ENCODE measurements at regions of chr6 and their contacts with region 1.

Region 1: DNA sequence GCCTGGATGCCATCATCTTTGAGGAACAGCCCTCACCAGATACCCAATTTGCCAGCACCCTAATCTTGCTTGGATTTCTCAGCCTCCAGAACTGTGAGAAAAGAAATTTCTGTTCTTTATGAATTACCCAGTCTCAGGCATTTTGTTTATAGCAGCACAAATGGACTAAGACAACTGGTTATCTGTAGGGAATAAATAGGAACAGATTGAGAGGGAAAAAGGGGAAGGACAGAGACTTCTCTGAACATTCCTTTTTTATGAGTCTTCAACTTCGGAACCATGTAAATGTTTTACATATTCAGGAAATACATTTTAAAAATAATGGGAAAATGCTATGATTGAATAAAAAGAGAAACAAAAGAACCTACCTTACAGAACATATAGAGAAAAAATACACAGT is 20.9 kb downstream of the KCTD20 start:
- DNase-seq: no peak
- ATAC-seq: no peak
- H3K4me3 ChIP-seq: no peak overlapping the region
- H3K4me3 Mint-ChIP-seq: no peak overlapping the region
- H3K27ac ChIP-seq: no peak overlapping the region
- H3K27ac Mint-ChIP-seq: no peak overlapping the region
- H3K4me1 ChIP-seq: peaks cover 2 to 8% of the 10 kb centered on the region in 2 experiments
- H3K4me1 Mint-ChIP-seq: peaks cover 43 to 52% (median 47%) of the 10 kb centered on the region in 3 donors
- H3K27me3 ChIP-seq: no peaks in the 10 kb centered on the region
- H3K27me3 Mint-ChIP-seq: no peaks in the 10 kb centered on the region

Region 2: GRCh38 chr6:36094238-36094637 is 369.4 kb before region 1 on chr6:
- CTCF ChIA-PET with region 1: no interaction called
- POLR2A ChIA-PET with region 1: no interaction called
- DNase-seq: no peak
- ATAC-seq: no peak
- H3K4me3 ChIP-seq: no peak overlapping the region
- H3K4me3 Mint-ChIP-seq: no peak overlapping the region
- H3K27ac ChIP-seq: no peak overlapping the region
- H3K27ac Mint-ChIP-seq: peak overlapping the region; percentile 69 to 80
- H3K4me1 ChIP-seq: peaks cover 12 to 13% of the 10 kb centered on the region in 2 experiments
- H3K4me1 Mint-ChIP-seq: peaks cover 24 to 32% (median 26%) of the 10 kb centered on the region in 3 donors
- H3K27me3 ChIP-seq: no peaks in the 10 kb centered on the region
- H3K27me3 Mint-ChIP-seq: no peaks in the 10 kb centered on the region

Region 3: DNA sequence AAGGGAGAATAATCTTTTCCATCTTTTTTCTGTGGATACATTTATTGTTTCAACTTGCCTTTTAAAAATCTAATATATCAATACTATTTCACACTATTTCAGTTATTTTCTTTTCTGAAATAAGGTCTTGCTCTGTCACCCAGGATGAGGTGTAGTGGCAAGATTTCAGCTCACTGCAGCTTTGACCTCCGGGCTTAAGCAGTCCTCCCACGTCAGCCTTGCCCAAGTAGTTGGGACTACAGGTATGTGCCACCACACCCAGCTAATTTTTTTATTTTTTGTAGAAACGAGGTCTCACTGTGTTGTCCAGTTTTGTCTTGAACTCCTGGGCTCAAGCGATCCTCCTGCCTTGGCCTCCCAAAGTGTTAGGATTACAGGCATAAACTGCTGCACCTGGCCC is 12.3 kb before region 1 on chr6:
- CTCF ChIA-PET with region 1: no interaction called
- POLR2A ChIA-PET with region 1: interaction called, 3 to 10 read pairs
- DNase-seq: no peak
- ATAC-seq: no peak
- H3K4me3 ChIP-seq: no peak overlapping the region
- H3K4me3 Mint-ChIP-seq: no peak overlapping the region
- H3K27ac ChIP-seq: no peak overlapping the region
- H3K27ac Mint-ChIP-seq: no peak overlapping the region
- H3K4me1 ChIP-seq: peaks cover 0 to 15% of the 10 kb centered on the region in 2 experiments
- H3K4me1 Mint-ChIP-seq: peaks cover 17 to 51% (median 46%) of the 10 kb centered on the region in 3 donors
- H3K27me3 ChIP-seq: no peaks in the 10 kb centered on the region
- H3K27me3 Mint-ChIP-seq: no peaks in the 10 kb centered on the region

Region 4: GRCh38 chr6:36479256-36479655 is 15.6 kb after region 1 on chr6:
- CTCF ChIA-PET with region 1: interaction called in 1 of 2 experiments, 3 read pairs
- POLR2A ChIA-PET with region 1: interaction called in 1 of 2 experiments, 11 read pairs
- DNase-seq: no peak
- ATAC-seq: no peak
- H3K4me3 ChIP-seq: no peak overlapping the region
- H3K4me3 Mint-ChIP-seq: no peak overlapping the region
- H3K27ac ChIP-seq: no peak overlapping the region
- H3K27ac Mint-ChIP-seq: peak overlapping the region; percentile 33 to 72
- H3K4me1 ChIP-seq: no peaks in the 10 kb centered on the region
- H3K4me1 Mint-ChIP-seq: peaks cover 15 to 20% (median 17%) of the 10 kb centered on the region in 3 donors
- H3K27me3 ChIP-seq: no peaks in the 10 kb centered on the region
- H3K27me3 Mint-ChIP-seq: no peaks in the 10 kb centered on the region

Region 5: DNA sequence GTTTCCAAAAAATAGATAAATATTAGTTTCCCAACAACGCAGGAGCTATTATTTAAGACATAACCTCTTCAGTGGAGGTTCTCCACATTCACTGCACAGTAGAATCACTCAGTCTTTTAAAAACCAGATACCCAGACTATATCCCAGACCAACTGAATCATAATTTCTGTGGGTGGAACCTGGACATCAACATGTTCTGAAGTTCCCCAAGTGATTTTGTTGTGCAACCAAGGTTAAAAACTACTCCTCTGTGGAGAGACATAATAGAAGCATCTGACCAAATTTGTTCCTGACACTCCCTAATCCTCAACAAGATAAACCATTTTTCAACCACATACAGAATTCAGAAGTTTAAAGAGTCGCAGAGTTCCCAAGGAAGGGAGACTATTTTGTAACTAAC is 41.3 kb after region 1 on chr6:
- CTCF ChIA-PET with region 1: interaction called in 1 of 2 experiments, 3 read pairs
- POLR2A ChIA-PET with region 1: interaction called in 1 of 2 experiments, 18 read pairs
- DNase-seq: no peak
- ATAC-seq: no peak
- H3K4me3 ChIP-seq: no peak overlapping the region
- H3K4me3 Mint-ChIP-seq: no peak overlapping the region
- H3K27ac ChIP-seq: no peak overlapping the region
- H3K27ac Mint-ChIP-seq: peak overlapping the region; percentile 69 to 72
- H3K4me1 ChIP-seq: peaks cover 8 to 16% of the 10 kb centered on the region in 2 experiments
- H3K4me1 Mint-ChIP-seq: peaks cover 38 to 58% (median 49%) of the 10 kb centered on the region in 3 donors
- H3K27me3 ChIP-seq: no peaks in the 10 kb centered on the region
- H3K27me3 Mint-ChIP-seq: no peaks in the 10 kb centered on the region

Region 6: DNA sequence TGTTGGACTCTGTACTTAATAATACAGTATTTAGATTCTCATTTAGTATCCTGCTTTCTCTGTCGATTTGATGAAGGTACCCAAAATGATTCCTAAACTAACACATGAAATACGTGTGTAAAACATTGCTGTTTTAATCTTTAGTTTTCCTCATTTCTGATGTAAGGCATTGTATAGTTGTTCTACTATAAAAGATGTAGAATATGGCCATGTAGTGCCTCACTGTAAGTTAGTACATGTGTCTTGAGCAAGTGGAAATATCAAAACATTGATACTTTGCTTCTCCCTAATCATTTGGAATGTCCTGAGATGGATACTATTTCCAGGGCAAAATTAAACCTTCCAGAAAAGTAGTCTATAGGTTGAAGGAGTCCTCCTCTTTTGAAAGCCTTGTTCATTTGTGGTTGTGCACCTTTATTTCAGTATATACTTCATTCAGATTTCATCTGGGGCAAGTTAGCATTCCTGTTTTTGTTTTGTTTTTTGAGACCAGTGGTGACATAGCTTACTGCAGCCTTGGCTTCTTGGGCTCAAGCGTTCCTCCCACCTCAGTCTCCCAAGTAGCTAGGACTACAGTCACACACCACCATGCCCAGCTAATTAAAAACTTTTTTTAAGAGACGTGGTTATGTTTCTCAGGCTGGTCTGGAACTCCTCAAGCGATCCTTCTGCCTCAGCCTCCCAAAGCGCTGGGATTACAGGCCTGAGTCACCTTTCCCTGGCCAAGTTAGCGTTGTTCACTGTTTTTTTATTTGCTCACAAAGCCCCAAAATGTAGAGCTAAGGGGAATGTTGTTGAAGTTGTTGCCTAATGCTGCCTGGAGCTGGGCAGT is 142.1 kb after region 1 on chr6:
- CTCF ChIA-PET with region 1: no interaction called
- POLR2A ChIA-PET with region 1: no interaction called
- DNase-seq: no peak
- ATAC-seq: no peak
- H3K4me3 ChIP-seq: no peak overlapping the region
- H3K4me3 Mint-ChIP-seq: peak overlapping the region in 2 of 3 donors; percentile 17 to 25
- H3K27ac ChIP-seq: peak overlapping the region; percentile 18
- H3K27ac Mint-ChIP-seq: peak overlapping the region; percentile 70 to 79
- H3K4me1 ChIP-seq: peaks cover 30 to 46% of the 10 kb centered on the region in 2 experiments
- H3K4me1 Mint-ChIP-seq: peaks cover 72 to 90% (median 88%) of the 10 kb centered on the region in 3 donors
- H3K27me3 ChIP-seq: no peaks in the 10 kb centered on the region
- H3K27me3 Mint-ChIP-seq: no peaks in the 10 kb centered on the region